ENCODE measurements at regions of chr20 and their contacts with region 1.

Region 1: DNA sequence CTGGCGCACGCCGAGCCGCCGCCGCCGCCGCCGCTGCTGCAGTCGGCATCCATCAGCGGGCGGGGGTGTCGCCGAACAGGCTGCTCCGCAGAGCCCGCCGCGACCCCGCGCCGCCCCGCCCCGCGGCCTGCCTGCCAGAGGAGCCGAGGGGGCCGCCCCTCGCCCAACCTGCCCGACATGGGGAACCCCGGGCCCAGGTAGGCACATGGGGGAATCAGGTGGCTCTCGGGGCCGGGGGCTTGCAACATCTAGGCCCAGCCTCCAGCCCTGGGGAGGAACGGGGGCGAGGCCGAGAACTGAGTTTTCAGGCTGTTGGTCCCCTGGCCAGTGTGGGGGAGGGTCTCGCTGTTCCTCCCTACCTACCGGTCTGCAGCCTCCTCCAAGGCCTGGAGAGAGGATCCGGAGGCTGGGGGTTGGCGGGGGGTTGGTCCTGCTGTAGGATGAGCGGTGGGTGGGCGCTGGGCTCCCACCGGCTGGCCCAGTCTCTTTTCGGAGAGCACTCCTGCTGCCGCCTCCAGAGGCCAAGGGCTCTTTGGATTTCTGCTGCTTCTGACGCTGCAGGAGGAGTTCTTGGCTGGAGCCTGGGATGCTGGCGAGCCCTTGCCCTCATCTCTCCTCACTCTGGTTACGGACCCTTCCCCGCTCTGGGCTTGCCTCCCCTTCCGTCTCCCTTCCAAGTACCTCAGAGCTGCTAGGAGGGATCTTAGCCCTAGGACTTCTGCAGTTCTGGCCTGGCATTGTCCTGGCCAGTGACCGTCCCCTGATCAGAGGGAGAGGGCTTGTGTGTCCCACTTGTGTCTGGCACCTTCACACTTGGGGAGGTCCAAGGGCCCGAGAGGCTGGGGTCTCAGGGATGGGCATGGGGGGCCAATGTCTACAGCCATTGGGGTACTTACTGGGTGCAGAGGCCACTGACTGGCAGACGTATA is at the start of gene EPB41L1:
- DNase-seq: peak in 5 of 7 donors; percentile 48 to 67 (median 61)
- H3K4me3 ChIP-seq: peak within 1 kb of the TSS; percentile 11 to 85 (median 59)
- H3K27ac ChIP-seq: peak within 1 kb of the TSS; percentile 66 to 94 (median 86)
- H3K4me1 ChIP-seq: peaks cover 30 to 76% of the 10 kb centered on the region in 2 donors
- H3K27me3 ChIP-seq: no peaks in the 10 kb centered on the region
- CTCF ChIP-seq: no peak
- POLR2A ChIP-seq: peak in 1 of 2 donors; percentile 65
- total RNA-seq, gene EPB41L1: 105 to 813 (median 165) TPM

Region 2: GRCh38 chr20:36193977-36194712 is 39.2 kb after region 1 on chr20:
- intact Hi-C with region 1: loop called (anchors 5 kb)
- DNase-seq: no peak
- H3K4me3 ChIP-seq: no peak overlapping the region
- H3K27ac ChIP-seq: peak overlapping the region in 3 of 5 donors; percentile 8 to 79 (median 35)
- H3K4me1 ChIP-seq: peaks cover 24 to 30% of the 10 kb centered on the region in 2 donors
- H3K27me3 ChIP-seq: no peaks in the 10 kb centered on the region
- CTCF ChIP-seq: no peak
- POLR2A ChIP-seq: no peak

Measured in adrenal gland (tissue), 19 donors.